Cardiac septum (tissue), 1 donor: ENCODE measurements at regions of chr1 and their contacts with region 1.

Region 1: DNA sequence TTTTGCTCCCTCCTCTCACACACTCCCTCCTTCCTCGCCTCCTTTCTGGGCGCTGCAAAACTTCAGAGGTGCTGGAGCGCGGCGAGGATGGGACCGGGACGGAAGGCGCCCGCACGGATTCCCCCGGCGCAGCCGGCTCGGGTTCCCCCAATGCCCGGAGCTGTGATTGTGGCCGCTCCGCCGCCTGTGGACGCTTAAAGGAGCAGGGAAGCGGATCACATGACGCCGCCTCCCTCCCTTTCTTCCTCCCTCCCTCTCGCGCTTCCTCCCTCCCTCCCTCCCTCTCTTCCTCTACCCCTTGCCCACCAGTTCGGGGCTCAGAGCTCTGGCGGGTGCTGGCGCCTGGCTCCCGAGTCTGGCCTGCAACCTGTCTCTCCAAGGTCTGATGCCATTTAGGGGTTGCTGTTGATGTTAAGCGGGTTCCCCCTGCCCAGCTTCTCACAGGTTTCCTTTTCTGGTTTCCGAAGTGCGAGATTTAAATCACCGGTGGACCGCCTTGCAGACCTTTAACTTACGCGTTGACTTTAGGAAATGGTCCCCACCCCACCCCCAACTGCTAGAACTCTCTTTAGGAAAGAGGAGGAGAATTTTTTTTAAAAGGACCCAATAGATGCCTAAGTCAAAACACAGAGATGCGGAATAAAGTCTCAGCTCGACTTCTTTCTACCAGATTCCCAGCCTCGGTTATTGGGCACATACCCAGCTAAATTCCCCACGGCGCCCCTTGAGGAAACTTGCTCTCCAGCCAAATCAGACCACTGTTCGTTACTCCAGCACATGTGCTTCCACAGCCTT is at the start of gene WLS:
- DNase-seq: peak; percentile 91
- total RNA-seq, gene WLS: 78.0 TPM

Region 2: DNA sequence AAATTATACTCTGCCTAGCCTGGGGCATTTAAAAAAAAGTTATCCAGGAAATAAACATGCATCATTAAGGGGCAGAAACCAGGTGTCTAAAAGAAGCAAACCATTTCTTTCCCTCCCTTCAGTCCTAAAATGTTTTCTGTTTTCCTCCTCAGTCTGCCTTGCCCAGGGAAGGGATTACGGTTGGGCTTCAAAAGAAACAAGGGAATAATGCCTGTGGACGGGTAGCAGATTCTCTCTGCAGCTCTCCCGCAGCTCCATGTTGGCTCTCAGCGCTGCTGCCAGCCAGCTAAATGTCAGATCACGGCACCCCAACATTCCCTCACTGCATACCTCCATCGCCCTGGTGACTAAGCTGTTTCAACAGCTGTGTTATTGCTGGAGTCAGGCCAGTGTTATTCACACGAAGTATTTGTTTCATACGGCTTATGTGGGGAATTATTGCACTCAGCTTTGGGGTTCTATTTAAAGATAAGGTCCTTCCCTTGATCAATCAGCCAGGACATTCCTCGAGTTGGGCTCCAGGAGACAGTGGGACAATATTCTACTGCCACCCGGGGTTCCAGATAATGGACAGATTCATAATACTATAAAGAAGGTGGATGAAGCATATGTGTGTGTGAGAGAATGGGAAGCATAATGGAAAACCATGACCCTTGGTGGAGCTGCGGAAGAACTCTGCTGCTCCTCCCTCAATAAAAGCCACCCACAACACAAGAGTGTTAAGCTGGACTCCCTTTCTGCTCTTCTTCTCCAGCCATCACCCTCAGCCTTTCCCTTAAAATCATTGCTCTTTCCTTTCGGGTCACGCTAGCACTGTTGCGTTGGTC is 58.4 kb before region 1 on chr1:
- intact Hi-C with region 1: loop called (anchors 2 kb)
- DNase-seq: no peak

Region 3: DNA sequence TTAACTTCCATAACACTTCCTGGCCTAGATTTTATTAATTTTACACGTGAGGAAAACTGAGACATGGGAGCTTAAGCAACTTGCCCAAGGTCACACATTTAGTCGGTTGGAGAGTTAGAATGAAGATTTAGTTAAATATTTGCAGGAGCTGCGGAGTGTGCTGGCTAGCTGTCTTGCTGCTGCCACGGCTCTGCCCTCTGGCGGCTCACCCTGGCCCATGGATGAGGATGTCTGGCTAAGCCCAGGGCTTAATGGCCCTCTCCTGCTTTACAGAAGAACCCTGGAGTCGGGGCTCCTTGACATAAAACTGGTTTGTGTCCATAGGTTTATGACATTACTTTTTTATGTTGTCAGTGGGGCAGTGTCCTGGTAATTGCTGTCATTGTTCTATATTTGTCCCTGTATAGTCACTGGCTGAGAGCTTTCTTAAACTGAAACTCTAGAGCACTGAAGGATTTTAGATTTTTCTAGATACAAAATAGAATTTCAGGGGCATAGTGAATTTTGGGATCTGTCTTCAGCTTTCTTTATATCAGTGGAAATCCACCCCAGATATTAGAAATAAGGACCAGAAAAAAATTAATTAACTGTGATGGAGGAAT is 88.6 kb after region 1 on chr1:
- intact Hi-C with region 1: loop called (anchors 5 kb)
- DNase-seq: no peak